Psoas muscle (tissue), 8 donors: ENCODE measurements at regions of chr2 and their contacts with region 1.

Region 1: DNA sequence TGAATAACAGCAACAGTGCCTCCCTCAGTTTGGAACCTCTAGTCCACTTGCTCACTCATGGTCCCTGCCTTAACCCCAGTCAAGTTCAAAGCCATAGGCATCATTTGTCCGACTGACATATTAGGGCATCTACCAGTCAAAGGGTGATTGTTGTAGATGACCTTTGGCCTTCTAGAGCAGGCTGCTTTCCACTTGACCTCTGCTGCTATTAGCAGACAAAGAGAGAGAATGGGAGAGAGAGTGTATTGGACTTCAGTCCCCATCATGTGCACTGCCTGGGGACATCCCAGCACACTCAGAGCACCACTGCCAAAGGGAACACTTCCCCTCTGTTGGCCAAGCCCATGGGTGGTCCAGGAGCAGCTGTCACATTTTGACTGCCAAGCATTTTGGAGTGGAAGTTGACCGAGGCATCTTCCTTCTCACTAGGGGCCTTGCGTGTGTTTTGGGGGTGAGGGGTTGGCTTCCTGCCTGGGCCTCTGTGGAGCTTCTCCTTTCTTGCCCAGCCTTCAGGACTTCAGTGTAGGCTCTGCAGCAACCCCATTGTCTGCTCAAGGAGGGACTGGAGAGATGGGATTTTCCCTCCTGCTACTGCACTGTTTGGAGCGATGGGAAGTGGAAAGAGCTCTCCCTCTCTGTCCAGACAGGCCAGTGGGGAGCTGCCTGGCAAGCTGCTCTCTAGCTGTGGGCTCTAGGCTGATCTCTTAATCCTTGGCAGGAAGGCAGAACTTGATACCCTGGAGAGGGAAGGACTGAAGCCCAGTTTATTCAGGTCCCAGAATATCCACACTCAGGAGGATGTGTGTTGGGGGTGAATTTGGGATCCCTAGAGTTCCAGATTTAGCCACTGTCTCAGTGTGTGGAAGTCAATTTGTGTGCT is 68.1 kb downstream of the TMEM247 start:
- DNase-seq: peak; percentile 56 to 78
- ATAC-seq: peak; percentile 68 to 73 (median 70)
- H3K4me3 ChIP-seq: peak overlapping the region; percentile 27
- H3K27ac ChIP-seq: peak overlapping the region; percentile 73
- H3K4me1 ChIP-seq: peaks cover 81% of the 10 kb centered on the region
- H3K27me3 ChIP-seq: no peaks in the 10 kb centered on the region
- CTCF ChIP-seq: no peak

Region 2: DNA sequence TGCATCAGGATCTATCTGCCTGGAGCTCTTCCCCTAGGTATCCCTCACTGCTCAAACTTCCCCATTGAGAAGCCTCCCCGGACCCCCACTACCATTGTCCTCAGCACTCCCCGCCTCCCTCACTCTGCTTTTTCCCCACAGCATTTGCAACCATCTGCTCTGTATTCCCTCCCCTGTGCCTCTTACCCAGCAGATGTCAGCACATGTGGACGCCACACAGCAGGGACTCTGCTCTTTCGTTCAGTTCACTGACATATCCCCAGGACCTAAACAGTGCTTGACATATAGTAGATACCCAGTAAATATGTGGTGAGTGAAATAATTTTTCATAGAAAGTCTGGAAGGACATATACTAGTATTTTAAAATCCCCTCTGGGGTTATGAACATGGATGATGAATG is 33.0 kb after region 1 on chr2:
- intact Hi-C with region 1: no loop called
- DNase-seq: no peak
- ATAC-seq: no peak
- H3K4me3 ChIP-seq: no peak overlapping the region
- H3K27ac ChIP-seq: no peak overlapping the region
- H3K4me1 ChIP-seq: no peaks in the 10 kb centered on the region
- H3K27me3 ChIP-seq: no peaks in the 10 kb centered on the region
- CTCF ChIP-seq: no peak

Region 3: DNA sequence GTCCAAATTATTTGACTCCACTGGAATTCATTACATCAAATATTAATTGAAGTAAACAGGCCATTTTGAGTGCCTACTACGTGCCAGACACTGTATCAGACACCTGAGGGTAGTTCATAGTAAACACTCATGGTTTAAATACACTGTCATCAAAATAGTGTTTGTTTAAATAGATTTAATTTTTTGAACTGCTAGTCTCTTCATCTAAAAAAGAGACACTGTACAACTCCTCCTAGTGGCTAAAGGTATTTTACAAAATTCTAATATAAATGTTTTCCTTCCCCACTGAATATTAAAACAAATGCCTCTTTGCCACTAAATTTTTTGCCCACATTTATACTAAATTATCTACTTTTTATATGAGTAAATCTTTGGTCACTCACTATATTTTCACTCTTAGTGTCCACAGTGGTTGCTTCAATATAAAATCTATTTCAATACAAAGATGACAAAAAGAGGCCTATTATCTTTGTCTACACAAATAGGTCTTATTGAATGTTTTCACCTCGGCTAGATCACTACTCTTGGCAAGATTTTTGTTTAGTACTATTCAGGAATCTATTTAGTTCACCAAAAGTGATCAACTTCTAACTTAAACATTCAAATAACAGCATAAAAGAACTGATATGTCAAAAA is 54.0 kb after region 1 on chr2:
- intact Hi-C with region 1: loop called in 1 of 2 experiments (anchors 5 kb)
- DNase-seq: no peak
- ATAC-seq: peak in 2 of 4 donors; percentile 17 to 49
- H3K4me3 ChIP-seq: no peak overlapping the region
- H3K27ac ChIP-seq: no peak overlapping the region
- H3K4me1 ChIP-seq: peaks cover 5% of the 10 kb centered on the region
- H3K27me3 ChIP-seq: no peaks in the 10 kb centered on the region
- CTCF ChIP-seq: peak; percentile 50

Region 4: GRCh38 chr2:46610021-46610420 is 62.6 kb after region 1 on chr2:
- intact Hi-C with region 1: loop called in 1 of 2 experiments (anchors 5 kb)
- DNase-seq: no peak
- ATAC-seq: no peak
- H3K4me3 ChIP-seq: no peak overlapping the region
- H3K27ac ChIP-seq: no peak overlapping the region
- H3K4me1 ChIP-seq: peaks cover 9% of the 10 kb centered on the region
- H3K27me3 ChIP-seq: no peaks in the 10 kb centered on the region
- CTCF ChIP-seq: no peak